Activated CD8-positive, alpha-beta T cell treated with anti-CD3 and anti-CD28 coated beads, Interleukin-2, amount 10 ng/mL, durations not matched to agents 7 days and 5 days (primary cell): ENCODE measurements at regions of chr16 and their contacts with region 1.

Region 1: GRCh38 chr16:1705688-1706385 is at the start of gene MAPK8IP3:
- DNase-seq: peak; percentile 92
- ATAC-seq: peak; percentile 86
- H3K4me3 Mint-ChIP-seq: peak within 1 kb of the TSS; percentile 95
- H3K27ac Mint-ChIP-seq: peak within 1 kb of the TSS; percentile 99
- H3K4me1 Mint-ChIP-seq: peaks cover 33% of the 10 kb centered on the region
- H3K27me3 Mint-ChIP-seq: no peaks in the 10 kb centered on the region
- total RNA-seq, gene MAPK8IP3: 75.9 to 82.7 TPM

Region 2: DNA sequence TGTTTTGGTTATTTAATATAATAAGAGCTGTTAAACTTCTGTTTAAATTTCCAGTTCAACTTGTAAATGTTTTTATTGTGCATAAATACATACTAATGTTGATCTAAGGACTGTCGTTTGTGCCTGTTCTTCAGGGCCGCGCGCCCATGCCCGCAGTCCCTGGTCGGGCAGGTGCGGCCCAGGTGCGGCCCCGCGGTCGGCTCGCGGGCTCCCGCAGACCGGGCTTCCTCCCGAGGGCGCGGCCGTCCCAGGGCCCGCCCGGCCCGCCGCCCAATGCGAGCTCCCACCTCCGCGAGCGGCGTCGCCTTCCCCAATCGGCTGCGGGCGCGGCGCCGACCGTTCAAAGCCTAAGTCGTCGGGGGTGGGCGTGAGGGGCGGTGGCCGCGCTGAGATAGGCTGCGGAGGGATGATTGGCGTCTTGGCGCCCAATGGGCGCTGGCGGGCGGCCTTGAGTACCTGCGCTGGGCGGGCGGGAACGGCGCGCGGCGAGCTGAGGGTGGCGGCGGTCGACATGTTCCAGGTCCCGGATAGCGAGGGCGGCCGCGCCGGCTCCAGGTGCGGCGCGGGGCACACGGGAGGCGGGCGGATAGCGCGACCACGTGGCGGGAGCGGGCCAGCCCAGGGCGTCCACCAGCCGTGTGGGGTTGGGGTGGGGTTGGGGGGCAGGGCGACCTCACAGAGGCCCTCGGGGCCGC is 27.9 kb before region 1 on chr16 and contains the start of gene JPT2:
- CTCF ChIA-PET with region 1: interaction called, 21 read pairs
- POLR2A ChIA-PET with region 1: interaction called, 19 read pairs
- DNase-seq: peak; percentile 96
- ATAC-seq: peak; percentile 99
- H3K4me3 Mint-ChIP-seq: peak within 1 kb of the TSS; percentile 78
- H3K27ac Mint-ChIP-seq: peak within 1 kb of the TSS; percentile 71
- H3K4me1 Mint-ChIP-seq: peaks cover 38% of the 10 kb centered on the region
- H3K27me3 Mint-ChIP-seq: no peaks in the 10 kb centered on the region
- total RNA-seq, gene JPT2: 56.1 to 61.7 TPM

Region 3: GRCh38 chr16:1772736-1773584 is 67.1 kb after region 1 on chr16 and contains the starts of genes EME2 and MRPS34:
- CTCF ChIA-PET with region 1: interaction called, 7 read pairs
- POLR2A ChIA-PET with region 1: interaction called, 11 read pairs
- DNase-seq: peak; percentile 86
- ATAC-seq: peak; percentile 62
- H3K4me3 Mint-ChIP-seq: peak within 1 kb of the TSS; percentile 99
- H3K27ac Mint-ChIP-seq: peak within 1 kb of the TSS; percentile 97
- H3K4me1 Mint-ChIP-seq: peaks cover 17% of the 10 kb centered on the region
- H3K27me3 Mint-ChIP-seq: no peaks in the 10 kb centered on the region
- total RNA-seq, gene EME2: 31.8 to 32.0 TPM
- total RNA-seq, gene MRPS34: 126 to 135 TPM

Region 4: DNA sequence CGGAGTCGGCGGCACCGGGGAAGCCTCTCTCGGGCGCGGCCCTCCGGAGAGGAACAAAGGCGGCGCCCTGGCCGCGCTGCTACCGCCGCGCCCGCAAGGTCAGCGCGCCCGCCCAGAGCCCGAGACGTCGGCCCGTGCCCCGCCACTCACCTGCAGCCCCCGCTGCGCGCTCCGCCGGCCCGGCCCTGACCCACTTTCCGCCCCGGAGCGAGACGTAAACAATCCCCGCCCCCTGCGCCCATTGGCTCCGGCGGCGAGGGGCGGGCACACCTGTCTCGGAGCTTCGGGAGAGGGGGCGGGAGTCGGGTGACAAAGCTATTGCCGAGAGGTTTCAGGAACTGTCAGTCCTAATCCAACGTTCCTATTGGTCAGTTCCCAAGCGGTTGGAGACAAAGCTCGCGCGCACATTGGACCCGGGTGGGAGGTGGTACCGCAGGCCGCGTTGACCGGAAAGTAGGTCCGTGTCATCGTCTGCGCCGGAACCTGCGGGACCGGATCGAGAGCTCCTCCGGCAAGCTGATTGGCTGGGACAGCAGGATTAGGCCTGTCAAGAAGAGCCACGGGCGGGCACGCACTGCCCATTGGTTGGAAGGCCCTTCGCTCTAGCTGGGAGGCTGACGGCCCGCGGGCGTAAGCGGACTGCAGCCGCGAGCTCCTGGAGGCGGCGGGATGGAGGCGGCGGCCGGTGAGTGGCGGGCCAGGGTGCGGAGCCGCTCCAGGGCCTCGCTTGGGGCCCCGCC is 76.7 kb after region 1 on chr16 and contains the starts of genes NUBP2 and SPSB3:
- CTCF ChIA-PET with region 1: interaction called, 17 read pairs
- POLR2A ChIA-PET with region 1: interaction called, 7 read pairs
- DNase-seq: peak; percentile 100
- ATAC-seq: peak; percentile 92
- H3K4me3 Mint-ChIP-seq: peak within 1 kb of the TSS; percentile 92
- H3K27ac Mint-ChIP-seq: peak within 1 kb of the TSS; percentile 90
- H3K4me1 Mint-ChIP-seq: peaks cover 33% of the 10 kb centered on the region
- H3K27me3 Mint-ChIP-seq: no peaks in the 10 kb centered on the region
- total RNA-seq, gene NUBP2: 58.5 to 61.8 TPM
- total RNA-seq, gene SPSB3: 31.1 to 33.0 TPM